ENCODE measurements at regions of chr2 and their contacts with region 1.

Region 1: GRCh38 chr2:225008935-225009334 is 33.3 kb downstream of the DOCK10 start:
- DNase-seq: peak; percentile 47
- H3K4me3 Mint-ChIP-seq: no peak overlapping the region
- H3K27ac Mint-ChIP-seq: no peak overlapping the region
- H3K4me1 Mint-ChIP-seq: peaks cover 92% of the 10 kb centered on the region
- H3K27me3 Mint-ChIP-seq: no peaks in the 10 kb centered on the region

Region 2: DNA sequence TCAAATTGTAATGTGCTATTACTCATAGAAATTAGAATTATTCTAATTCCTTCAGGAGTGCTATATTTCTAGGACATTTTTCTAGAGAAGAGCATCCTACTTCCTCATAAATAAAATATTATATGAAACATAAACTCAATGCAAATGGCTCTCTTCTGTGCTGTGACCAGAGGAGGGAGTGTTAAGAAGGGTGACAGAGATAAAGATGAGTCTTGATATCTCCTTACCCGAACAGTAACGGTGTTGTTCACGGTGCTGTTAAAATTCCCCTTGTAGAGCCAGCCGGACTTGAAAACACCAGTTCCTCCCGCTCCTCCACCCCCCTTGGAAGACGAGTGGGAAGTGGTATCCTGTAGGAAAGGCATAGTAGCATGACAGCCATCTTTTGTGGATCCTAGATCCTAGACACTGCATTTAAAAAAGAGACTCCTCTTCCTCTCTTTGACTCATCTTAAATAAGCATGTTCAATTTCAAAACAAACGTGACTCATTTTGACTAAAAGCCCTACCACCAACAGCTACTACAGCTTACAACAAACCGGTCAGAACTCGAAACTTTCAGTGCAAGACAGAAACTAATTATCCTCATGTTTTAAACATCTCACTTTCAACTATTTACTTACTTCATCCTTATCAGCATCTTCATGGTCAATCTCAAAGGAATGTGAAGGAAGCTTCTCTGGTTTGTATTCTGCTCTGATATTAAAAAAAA is 122.9 kb before region 1 on chr2:
- CTCF ChIA-PET with region 1: interaction called, 4 read pairs
- intact Hi-C with region 1: loop called (anchors 2 kb)
- DNase-seq: no peak
- H3K4me3 Mint-ChIP-seq: no peak overlapping the region
- H3K27ac Mint-ChIP-seq: peak overlapping the region; percentile 81
- H3K4me1 Mint-ChIP-seq: peaks cover 71% of the 10 kb centered on the region
- H3K27me3 Mint-ChIP-seq: no peaks in the 10 kb centered on the region

Region 3: DNA sequence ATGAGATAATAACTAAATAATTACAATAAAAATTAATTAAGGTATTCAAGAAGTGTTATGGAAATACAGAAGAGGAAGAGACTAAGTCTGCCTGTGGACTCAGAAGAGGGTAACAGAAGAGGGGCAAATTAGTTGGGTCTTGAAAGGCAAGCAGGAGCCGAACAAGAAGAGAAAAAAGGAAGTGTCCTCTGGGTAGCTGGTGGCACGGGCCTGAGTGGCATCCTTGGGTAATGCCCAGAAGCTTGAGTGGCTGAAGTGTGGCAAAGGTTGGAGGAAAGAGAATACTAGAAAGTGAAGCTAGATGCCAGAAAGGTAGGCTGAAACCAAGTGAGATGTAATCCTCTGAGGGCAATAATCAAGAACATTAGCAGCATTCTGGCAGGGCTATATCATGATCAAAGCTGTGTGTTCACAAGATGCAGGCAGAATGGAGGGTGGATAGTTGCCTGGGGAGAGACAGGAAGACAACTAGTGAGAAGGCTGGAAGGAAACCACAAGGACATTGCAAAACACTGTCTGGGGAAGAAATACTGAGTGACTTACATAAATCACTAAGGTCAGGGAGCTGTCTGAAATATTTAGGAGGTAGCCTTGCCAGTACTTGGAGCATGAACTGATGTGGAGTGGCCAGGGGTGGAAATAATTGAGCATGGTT is 17.1 kb after region 1 on chr2:
- CTCF ChIA-PET with region 1: interaction called, 7 read pairs
- intact Hi-C with region 1: loop called (anchors 1 kb)
- DNase-seq: no peak
- H3K4me3 Mint-ChIP-seq: no peak overlapping the region
- H3K27ac Mint-ChIP-seq: peak overlapping the region; percentile 37
- H3K4me1 Mint-ChIP-seq: peaks cover 86% of the 10 kb centered on the region
- H3K27me3 Mint-ChIP-seq: no peaks in the 10 kb centered on the region

Region 4: GRCh38 chr2:225064362-225064761 is 55.4 kb after region 1 on chr2:
- CTCF ChIA-PET with region 1: no interaction called
- intact Hi-C with region 1: loop called (anchors 1 kb)
- DNase-seq: no peak
- H3K4me3 Mint-ChIP-seq: no peak overlapping the region
- H3K27ac Mint-ChIP-seq: no peak overlapping the region
- H3K4me1 Mint-ChIP-seq: peaks cover 45% of the 10 kb centered on the region
- H3K27me3 Mint-ChIP-seq: no peaks in the 10 kb centered on the region

Measured in activated naive CD4-positive, alpha-beta T cell treated with anti-CD3 and anti-CD28 coated beads for 36 hours (primary cell).